CD4-positive, alpha-beta T cell (primary cell): ENCODE measurements at regions of chr2 and their contacts with region 1.

Region 1: DNA sequence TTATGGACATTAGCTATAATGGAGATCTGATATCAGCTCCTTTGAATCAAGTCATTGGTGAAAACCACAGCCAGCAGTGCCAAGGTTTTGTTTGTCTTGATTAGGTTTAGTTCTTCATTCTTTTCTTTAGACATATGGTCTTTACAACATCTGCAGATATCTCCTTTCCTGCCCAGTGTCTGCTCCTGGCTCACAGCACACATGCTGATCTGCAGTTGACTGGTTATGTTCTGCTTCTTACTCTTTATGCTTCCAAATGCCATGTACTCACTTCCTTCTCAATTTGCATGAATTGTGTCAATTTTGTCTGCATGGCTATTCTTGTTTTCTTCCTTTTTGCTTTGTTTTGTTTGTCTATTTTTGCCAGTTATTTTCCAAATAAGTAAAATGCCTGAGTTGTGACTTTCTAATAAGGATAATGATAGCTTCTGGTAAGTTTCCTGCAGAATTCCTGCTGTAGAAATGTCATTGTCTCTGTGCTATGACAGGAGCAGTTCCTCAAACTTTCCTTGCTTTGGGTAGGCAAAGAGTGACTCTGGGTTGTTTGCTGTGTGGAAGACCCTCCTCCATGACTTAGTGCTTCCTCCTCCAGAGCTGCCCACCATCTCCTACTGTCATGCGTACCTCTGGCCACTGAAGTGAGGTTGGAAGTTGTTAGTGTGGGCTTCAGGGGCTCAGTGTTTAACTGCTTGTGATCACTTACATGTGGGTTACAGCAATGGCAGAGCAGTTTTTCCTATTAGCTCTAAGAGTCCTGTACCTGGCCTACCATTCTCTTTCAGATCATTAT is 8.2 kb downstream of the ARHGAP25 start:
- DNase-seq: peak in 1 of 14 experiments; percentile 2
- ATAC-seq: no peak
- H3K4me3 ChIP-seq: peak overlapping the region; percentile 73
- H3K4me3 Mint-ChIP-seq: peak overlapping the region; percentile 28
- H3K27ac ChIP-seq: peak overlapping the region in 1 of 2 donors; percentile 22
- H3K27ac Mint-ChIP-seq: no peak overlapping the region
- H3K4me1 ChIP-seq: peaks cover 95% of the 10 kb centered on the region
- H3K4me1 Mint-ChIP-seq: peaks cover 95% of the 10 kb centered on the region
- H3K27me3 ChIP-seq: no peaks in the 10 kb centered on the region
- H3K27me3 Mint-ChIP-seq: no peaks in the 10 kb centered on the region
- CTCF ChIP-seq: no peak

Region 2: GRCh38 chr2:68083346-68083745 is 659.5 kb before region 1 on chr2:
- CTCF ChIA-PET with region 1: no interaction called
- POLR2A ChIA-PET with region 1: no interaction called
- intact Hi-C with region 1: no loop called
- DNase-seq: no peak
- ATAC-seq: no peak
- H3K4me3 ChIP-seq: no peak overlapping the region
- H3K4me3 Mint-ChIP-seq: no peak overlapping the region
- H3K27ac ChIP-seq: no peak overlapping the region
- H3K27ac Mint-ChIP-seq: no peak overlapping the region
- H3K4me1 ChIP-seq: no peaks in the 10 kb centered on the region
- H3K4me1 Mint-ChIP-seq: no peaks in the 10 kb centered on the region
- H3K27me3 ChIP-seq: no peaks in the 10 kb centered on the region
- H3K27me3 Mint-ChIP-seq: peaks cover 10% of the 10 kb centered on the region
- CTCF ChIP-seq: no peak

Region 3: DNA sequence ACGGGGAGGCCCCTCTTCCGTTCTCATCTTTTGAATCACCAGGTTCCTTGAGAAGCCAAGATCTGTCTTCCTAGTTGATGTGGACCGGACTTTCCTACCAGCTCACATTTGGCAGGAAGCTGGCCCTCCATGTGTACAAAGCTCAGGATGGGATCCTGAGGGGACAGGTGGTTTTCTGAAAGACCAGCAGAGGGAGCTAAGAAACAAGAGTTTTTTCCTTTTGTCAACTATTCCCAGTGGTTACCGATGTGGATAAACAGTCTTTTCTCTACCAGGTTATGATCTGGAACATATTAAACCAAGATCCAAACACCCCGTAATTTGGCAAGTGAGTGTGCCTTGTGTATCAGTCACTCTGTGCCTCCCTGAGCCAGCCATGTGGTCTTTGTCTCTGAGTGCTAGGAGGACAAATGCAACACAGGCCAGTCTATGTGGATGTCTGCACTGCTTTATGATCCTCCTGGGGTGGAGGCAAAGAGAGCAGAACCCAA is 33.4 kb before region 1 on chr2:
- CTCF ChIA-PET with region 1: interaction called, 11 read pairs
- POLR2A ChIA-PET with region 1: interaction called, 3 read pairs
- intact Hi-C with region 1: loop called in 1 of 2 experiments (anchors 5 kb)
- DNase-seq: peak in 4 of 14 experiments; percentile 36 to 62 (median 58)
- ATAC-seq: peak; percentile 77
- H3K4me3 ChIP-seq: no peak overlapping the region
- H3K4me3 Mint-ChIP-seq: no peak overlapping the region
- H3K27ac ChIP-seq: no peak overlapping the region
- H3K27ac Mint-ChIP-seq: no peak overlapping the region
- H3K4me1 ChIP-seq: peaks cover 6% of the 10 kb centered on the region
- H3K4me1 Mint-ChIP-seq: peaks cover 28% of the 10 kb centered on the region
- H3K27me3 ChIP-seq: no peaks in the 10 kb centered on the region
- H3K27me3 Mint-ChIP-seq: no peaks in the 10 kb centered on the region
- CTCF ChIP-seq: peak; percentile 92

Region 4: DNA sequence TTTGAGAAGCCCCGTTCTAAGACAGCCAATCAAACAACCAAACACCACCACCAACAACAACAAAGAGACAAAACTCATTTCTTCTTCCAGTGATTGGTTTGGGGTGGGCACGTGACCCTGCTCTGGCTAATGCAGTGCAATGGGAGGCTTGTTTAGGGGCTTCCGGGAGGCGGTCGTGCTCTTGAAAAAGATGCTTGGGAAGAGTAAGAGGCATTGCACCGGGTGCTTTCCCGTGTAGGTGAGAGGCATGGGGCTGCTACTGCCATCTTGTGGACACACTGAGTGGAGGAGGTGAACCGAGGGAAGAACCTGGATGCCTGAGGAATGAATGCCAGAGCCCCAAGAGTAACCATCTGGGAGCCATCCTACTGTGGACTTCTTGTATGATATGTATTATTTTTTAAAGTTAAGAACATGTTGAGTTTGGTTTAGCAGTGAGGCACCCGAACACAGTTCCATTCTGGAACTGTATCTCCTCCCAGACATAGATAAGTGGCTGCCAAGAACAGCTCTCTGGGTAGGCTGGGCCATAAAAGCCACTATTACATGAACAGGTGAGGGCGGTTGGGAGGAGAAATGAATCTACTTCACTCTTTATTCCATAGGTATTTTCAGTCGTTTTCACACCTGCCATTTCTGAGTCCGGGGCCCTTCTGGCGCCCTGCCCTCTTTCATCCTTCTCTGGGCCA is 27.3 kb before region 1 on chr2:
- CTCF ChIA-PET with region 1: interaction called, 10 read pairs
- POLR2A ChIA-PET with region 1: interaction called, 79 read pairs
- intact Hi-C with region 1: loop called in 1 of 2 experiments (anchors 5 kb)
- DNase-seq: peak in 4 of 14 experiments; percentile 40 to 78 (median 67)
- ATAC-seq: peak; percentile 44
- H3K4me3 ChIP-seq: no peak overlapping the region
- H3K4me3 Mint-ChIP-seq: no peak overlapping the region
- H3K27ac ChIP-seq: peak overlapping the region in 1 of 2 donors; percentile 65
- H3K27ac Mint-ChIP-seq: peak overlapping the region; percentile 83
- H3K4me1 ChIP-seq: peaks cover 51% of the 10 kb centered on the region
- H3K4me1 Mint-ChIP-seq: peaks cover 82% of the 10 kb centered on the region
- H3K27me3 ChIP-seq: no peaks in the 10 kb centered on the region
- H3K27me3 Mint-ChIP-seq: no peaks in the 10 kb centered on the region
- CTCF ChIP-seq: no peak

Region 5: DNA sequence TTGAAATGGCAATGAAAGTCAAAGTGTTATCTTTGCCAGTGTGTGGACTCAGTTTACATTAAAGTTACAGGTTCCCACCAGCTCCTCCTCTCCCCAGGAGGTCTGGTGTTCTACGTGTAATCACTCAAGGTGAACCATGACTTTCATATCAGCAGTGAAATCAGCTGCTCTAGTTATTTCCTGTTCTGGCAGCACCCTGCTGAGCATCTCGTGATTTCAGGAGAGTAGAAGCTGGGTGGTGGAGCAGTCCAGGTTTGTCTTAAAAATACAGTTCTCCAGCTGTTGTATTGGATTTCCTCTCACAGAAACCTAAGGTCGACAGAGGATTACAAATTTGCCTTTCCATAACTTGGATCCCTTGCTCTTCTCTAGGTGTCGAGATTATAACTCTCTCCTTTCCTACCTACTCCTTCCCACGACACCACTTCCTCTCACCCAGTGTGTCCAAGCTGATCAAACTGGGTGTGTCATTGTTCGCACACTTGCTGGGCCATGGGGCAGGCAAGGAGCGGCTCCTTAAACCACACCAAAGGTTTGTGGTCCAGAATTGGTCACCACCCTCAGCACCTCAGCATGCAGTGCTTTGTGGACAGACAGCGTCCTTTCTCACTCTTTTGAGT is 21.2 kb before region 1 on chr2:
- CTCF ChIA-PET with region 1: interaction called, 10 read pairs
- POLR2A ChIA-PET with region 1: interaction called, 79 read pairs
- intact Hi-C with region 1: no loop called
- DNase-seq: peak in 6 of 14 experiments; percentile 25 to 82 (median 68)
- ATAC-seq: peak; percentile 83
- H3K4me3 ChIP-seq: peak overlapping the region; percentile 19
- H3K4me3 Mint-ChIP-seq: peak overlapping the region; percentile 82
- H3K27ac ChIP-seq: peak overlapping the region; percentile 72 to 76
- H3K27ac Mint-ChIP-seq: peak overlapping the region; percentile 83
- H3K4me1 ChIP-seq: peaks cover 88% of the 10 kb centered on the region
- H3K4me1 Mint-ChIP-seq: peaks cover 96% of the 10 kb centered on the region
- H3K27me3 ChIP-seq: no peaks in the 10 kb centered on the region
- H3K27me3 Mint-ChIP-seq: no peaks in the 10 kb centered on the region
- CTCF ChIP-seq: no peak

Region 6: DNA sequence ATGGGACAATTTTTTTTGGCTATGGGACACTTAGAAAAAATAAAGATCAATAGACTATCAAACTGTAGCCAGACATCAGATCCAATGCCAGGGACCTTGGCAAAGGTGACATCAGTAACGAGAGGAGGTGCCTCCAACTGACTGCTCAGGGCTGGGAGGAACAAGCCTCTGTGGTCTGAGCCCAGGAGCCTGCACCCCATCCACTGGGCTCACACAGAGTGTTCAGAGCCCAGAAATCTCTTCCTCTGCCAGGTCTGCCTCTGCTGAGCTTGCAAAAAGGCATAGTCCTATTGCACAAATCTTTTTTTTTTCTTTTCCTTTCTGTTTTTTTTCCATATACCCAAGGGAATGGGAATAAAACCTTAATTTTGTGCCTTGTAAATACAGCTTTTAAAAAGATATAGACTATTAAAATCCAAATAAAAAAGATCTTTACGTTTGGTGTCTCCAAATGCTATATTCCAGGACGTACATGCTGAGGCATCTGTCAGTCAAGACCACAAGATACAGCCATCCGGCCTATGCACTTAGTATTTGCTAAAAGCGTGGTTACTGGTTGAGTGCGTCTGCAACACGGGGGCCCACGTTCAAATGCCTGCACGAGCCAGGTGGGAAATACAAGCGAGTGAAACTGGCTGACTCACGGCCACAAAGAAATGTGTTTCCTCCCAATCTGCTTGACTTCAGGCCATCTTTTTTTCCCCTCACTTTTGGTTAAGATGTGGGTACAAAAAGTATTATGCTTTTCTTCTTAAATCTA is 16.0 kb before region 1 on chr2:
- CTCF ChIA-PET with region 1: interaction called, 10 read pairs
- POLR2A ChIA-PET with region 1: interaction called, 79 read pairs
- intact Hi-C with region 1: loop called in 1 of 2 experiments (anchors 1 kb)
- DNase-seq: peak; percentile 52 to 92 (median 74)
- ATAC-seq: peak; percentile 97
- H3K4me3 ChIP-seq: no peak overlapping the region
- H3K4me3 Mint-ChIP-seq: peak overlapping the region; percentile 46
- H3K27ac ChIP-seq: peak overlapping the region; percentile 10 to 42
- H3K27ac Mint-ChIP-seq: peak overlapping the region; percentile 88
- H3K4me1 ChIP-seq: peaks cover 63% of the 10 kb centered on the region
- H3K4me1 Mint-ChIP-seq: peaks cover 78% of the 10 kb centered on the region
- H3K27me3 ChIP-seq: no peaks in the 10 kb centered on the region
- H3K27me3 Mint-ChIP-seq: no peaks in the 10 kb centered on the region
- CTCF ChIP-seq: no peak

Region 7: GRCh38 chr2:68766376-68766845 is 23.6 kb after region 1 on chr2:
- CTCF ChIA-PET with region 1: interaction called, 5 read pairs
- POLR2A ChIA-PET with region 1: interaction called, 67 read pairs
- intact Hi-C with region 1: no loop called
- DNase-seq: peak; percentile 48 to 89 (median 66)
- ATAC-seq: peak; percentile 71
- H3K4me3 ChIP-seq: peak overlapping the region; percentile 42
- H3K4me3 Mint-ChIP-seq: peak overlapping the region; percentile 84
- H3K27ac ChIP-seq: peak overlapping the region; percentile 89 to 93
- H3K27ac Mint-ChIP-seq: peak overlapping the region; percentile 94
- H3K4me1 ChIP-seq: peaks cover 83% of the 10 kb centered on the region
- H3K4me1 Mint-ChIP-seq: peaks cover 98% of the 10 kb centered on the region
- H3K27me3 ChIP-seq: no peaks in the 10 kb centered on the region
- H3K27me3 Mint-ChIP-seq: no peaks in the 10 kb centered on the region
- CTCF ChIP-seq: no peak

Region 8: GRCh38 chr2:69589973-69590652 is 847.3 kb after region 1 on chr2:
- CTCF ChIA-PET with region 1: no interaction called
- POLR2A ChIA-PET with region 1: no interaction called
- intact Hi-C with region 1: no loop called
- DNase-seq: no peak
- ATAC-seq: peak; percentile 64
- H3K4me3 ChIP-seq: no peak overlapping the region
- H3K4me3 Mint-ChIP-seq: peak overlapping the region; percentile 56
- H3K27ac ChIP-seq: no peak overlapping the region
- H3K27ac Mint-ChIP-seq: peak overlapping the region; percentile 76
- H3K4me1 ChIP-seq: peaks cover 60% of the 10 kb centered on the region
- H3K4me1 Mint-ChIP-seq: peaks cover 83% of the 10 kb centered on the region
- H3K27me3 ChIP-seq: no peaks in the 10 kb centered on the region
- H3K27me3 Mint-ChIP-seq: no peaks in the 10 kb centered on the region
- CTCF ChIP-seq: no peak